ENCODE measurements at regions of chr2 and their contacts with region 1.

Region 1: GRCh38 chr2:47334356-47335136 is 68.4 kb upstream of the MSH2 start:
- DNase-seq: no peak
- H3K4me3 Mint-ChIP-seq: no peak overlapping the region
- H3K27ac Mint-ChIP-seq: no peak overlapping the region
- H3K4me1 Mint-ChIP-seq: no peaks in the 10 kb centered on the region
- H3K27me3 Mint-ChIP-seq: peaks cover 16% of the 10 kb centered on the region

Region 2: GRCh38 chr2:47388888-47389287 is 54.3 kb after region 1 on chr2:
- intact Hi-C with region 1: loop called (anchors 1 kb)
- DNase-seq: no peak
- H3K4me3 Mint-ChIP-seq: no peak overlapping the region
- H3K27ac Mint-ChIP-seq: no peak overlapping the region
- H3K4me1 Mint-ChIP-seq: no peaks in the 10 kb centered on the region
- H3K27me3 Mint-ChIP-seq: peaks cover 19% of the 10 kb centered on the region

Region 3: DNA sequence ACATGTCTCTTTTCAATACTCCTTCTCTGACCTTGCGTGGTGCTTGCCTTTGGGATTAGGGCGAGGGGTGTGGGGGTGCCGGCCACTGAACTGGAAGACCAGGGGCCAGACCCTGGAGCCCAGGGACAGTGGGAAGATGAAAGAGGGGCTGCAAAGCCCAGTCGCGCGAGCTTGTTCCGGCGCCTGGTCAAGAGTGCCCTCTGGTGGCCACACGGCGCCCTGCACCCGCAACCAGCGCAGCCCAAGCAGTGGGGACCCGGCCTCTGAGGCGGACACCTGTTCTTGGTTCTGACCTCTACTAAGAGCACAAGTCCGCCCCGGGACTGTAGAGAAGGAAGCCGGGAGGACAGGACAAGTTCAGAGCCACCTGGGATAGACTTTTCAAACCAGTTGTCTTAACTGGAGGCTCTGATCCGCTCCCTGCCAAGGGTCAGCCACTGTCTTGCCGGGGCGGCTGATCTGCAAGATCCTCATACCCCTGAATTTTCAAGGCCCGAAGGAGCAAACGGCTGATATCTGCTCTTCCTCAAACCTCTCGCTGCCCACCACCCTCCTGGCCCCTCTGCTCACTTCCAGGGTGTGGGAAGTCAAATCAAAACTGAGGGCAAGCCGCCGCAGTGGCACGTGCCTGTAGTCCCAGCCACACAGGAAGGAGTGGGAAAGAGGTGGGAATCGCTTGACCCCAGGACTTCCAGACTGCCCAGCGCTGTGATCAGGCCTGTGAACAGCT is 433.5 kb after region 1 on chr2:
- intact Hi-C with region 1: loop called (anchors 1 kb)
- DNase-seq: peak; percentile 92
- H3K4me3 Mint-ChIP-seq: peak overlapping the region; percentile 49
- H3K27ac Mint-ChIP-seq: no peak overlapping the region
- H3K4me1 Mint-ChIP-seq: peaks cover 5% of the 10 kb centered on the region
- H3K27me3 Mint-ChIP-seq: no peaks in the 10 kb centered on the region